ENCODE measurements at regions of chr13 and their contacts with region 1.

Region 1: GRCh38 chr13:99997702-99998214 is 16.2 kb downstream of the ZIC2 start:
- DNase-seq: no peak
- H3K4me3 ChIP-seq: no peak overlapping the region
- H3K27ac ChIP-seq: no peak overlapping the region
- H3K4me1 ChIP-seq: peaks cover 9% of the 10 kb centered on the region
- H3K27me3 ChIP-seq: no peaks in the 10 kb centered on the region
- CTCF ChIP-seq: no peak

Region 2: GRCh38 chr13:98835156-98835555 is 1162.6 kb before region 1 on chr13:
- CTCF ChIA-PET with region 1: no interaction called
- POLR2A ChIA-PET with region 1: interaction called, 33 read pairs
- intact Hi-C with region 1: no loop called
- DNase-seq: no peak
- H3K4me3 ChIP-seq: no peak overlapping the region
- H3K27ac ChIP-seq: no peak overlapping the region
- H3K4me1 ChIP-seq: no peaks in the 10 kb centered on the region
- H3K27me3 ChIP-seq: no peaks in the 10 kb centered on the region
- CTCF ChIP-seq: no peak